GM18951 (cell line): ENCODE measurements at regions of chr22 and their contacts with region 1.

Region 1: GRCh38 chr22:40031766-40032470 is 37.2 kb downstream of the FAM83F start:
- POLR2A ChIP-seq: no peak

Region 2: GRCh38 chr22:39532215-39533071 is 499.5 kb before region 1 on chr22 and contains the start of gene RPS19BP1:
- in situ Hi-C with region 1: loop called (anchors 5 kb)
- POLR2A ChIP-seq: peak; percentile 99